ENCODE measurements at regions of chr11 and their contacts with region 1.

Region 1: GRCh38 chr11:120511116-120511819 is at the start of gene GRIK4:
- DNase-seq: no peak
- H3K4me3 ChIP-seq: peak within 1 kb of the TSS; percentile 49
- CTCF ChIP-seq: peak; percentile 93

Region 2: DNA sequence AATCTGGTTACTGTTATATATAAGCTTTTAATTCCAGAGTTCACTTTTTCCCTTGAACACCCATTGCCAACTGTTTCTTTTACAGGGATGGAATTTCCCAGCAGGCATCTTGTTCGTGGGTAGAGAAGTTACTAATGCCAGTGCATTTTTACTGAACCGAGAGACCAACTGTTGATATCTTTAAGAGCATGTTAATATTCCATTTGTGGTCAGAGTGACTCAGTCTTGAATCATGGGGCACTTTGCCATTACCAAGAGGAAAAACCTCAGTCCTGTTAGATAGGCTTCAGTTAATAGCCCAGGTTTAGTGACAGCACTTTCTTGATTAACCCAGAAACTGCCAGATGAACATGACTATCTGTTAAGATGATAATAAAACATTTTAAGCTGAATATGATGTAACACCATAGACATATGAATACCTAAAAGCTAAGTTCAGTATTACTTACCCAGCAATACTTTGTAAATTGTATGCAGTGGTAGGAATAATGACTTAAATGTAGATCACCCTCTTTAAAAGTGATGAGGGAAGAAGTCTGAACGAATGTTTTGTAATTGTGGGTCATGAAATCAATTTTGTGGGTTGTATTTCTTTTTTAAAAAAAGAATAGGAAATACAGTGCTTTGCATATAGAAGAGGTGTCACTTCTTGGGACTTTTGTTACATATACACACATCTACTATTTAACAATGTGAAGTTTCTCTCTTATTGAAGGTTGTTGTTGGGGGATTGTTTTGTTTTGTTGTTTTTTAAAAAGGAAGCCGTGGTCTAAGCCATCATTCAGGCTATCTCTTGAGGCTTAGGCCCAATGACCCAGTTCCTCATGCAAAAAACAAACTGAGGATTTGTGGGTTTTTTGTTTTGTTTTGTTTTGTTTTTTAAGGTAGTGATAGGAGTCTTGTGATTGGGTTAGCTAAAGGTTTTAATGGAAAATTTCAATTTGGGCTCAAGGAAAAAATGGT is 78.9 kb before region 1 on chr11:
- CTCF ChIA-PET with region 1: no interaction called
- POLR2A ChIA-PET with region 1: no interaction called
- DNase-seq: peak; percentile 98
- H3K4me3 ChIP-seq: no peak overlapping the region
- CTCF ChIP-seq: no peak

Region 3: GRCh38 chr11:120500414-120501071 is 10.7 kb before region 1 on chr11:
- CTCF ChIA-PET with region 1: interaction called, 21 read pairs
- POLR2A ChIA-PET with region 1: no interaction called
- DNase-seq: no peak
- H3K4me3 ChIP-seq: no peak overlapping the region
- CTCF ChIP-seq: no peak

Region 4: DNA sequence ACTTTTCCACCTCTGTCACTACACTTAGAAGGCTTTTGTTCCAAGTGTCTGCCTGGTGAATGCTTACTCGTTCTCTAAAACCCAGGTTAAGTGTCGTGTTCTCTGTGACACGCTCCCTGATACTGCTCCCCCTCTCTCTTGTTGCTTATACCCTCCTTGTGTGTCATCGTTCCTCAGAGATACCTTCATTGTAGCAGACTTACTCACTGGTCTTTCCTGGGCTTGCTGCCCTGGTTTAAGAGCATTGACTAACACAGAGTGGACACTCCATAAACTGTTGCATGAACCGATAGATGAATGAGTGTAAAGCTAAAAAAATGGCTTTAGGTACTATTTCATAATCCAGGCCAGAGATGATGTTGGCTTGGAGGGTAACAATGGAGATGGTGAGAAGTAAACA is 171.6 kb after region 1 on chr11:
- CTCF ChIA-PET with region 1: interaction called, 249 read pairs
- POLR2A ChIA-PET with region 1: no interaction called
- DNase-seq: no peak
- H3K4me3 ChIP-seq: no peak overlapping the region
- CTCF ChIP-seq: no peak

Region 5: GRCh38 chr11:120801801-120802689 is 290.8 kb after region 1 on chr11:
- CTCF ChIA-PET with region 1: interaction called, 18 read pairs
- POLR2A ChIA-PET with region 1: no interaction called
- DNase-seq: no peak
- H3K4me3 ChIP-seq: no peak overlapping the region
- CTCF ChIP-seq: peak; percentile 82

Region 6: GRCh38 chr11:121194731-121195596 is 683.7 kb after region 1 on chr11:
- CTCF ChIA-PET with region 1: interaction called, 17 read pairs
- POLR2A ChIA-PET with region 1: no interaction called
- DNase-seq: peak; percentile 10
- H3K4me3 ChIP-seq: no peak overlapping the region
- CTCF ChIP-seq: peak; percentile 62